CD8-positive, alpha-beta T cell (primary cell): ENCODE measurements at regions of chr14 and their contacts with region 1.

Region 1: DNA sequence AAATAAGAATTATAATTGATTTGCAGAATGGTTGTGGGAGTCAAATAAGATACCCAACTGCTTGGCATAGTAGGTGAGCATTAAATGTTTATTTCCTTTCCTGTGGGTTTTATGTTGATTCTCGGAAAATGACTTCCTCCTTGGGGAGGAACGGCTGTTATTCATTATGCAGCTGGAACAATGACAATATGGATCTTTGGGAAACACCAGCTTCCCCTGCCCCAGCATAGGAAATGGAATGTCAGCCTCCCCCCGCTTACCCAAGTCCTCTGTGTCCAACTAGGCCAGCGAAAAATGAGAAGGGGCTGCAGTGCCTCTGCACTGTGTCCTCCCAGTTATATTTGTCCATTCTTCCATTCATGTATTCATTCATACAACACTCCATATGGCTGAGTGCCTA is 11.7 kb upstream of the CCDC177 start:
- DNase-seq: no peak
- ATAC-seq: no peak
- H3K4me3 ChIP-seq: no peak overlapping the region
- H3K4me3 Mint-ChIP-seq: no peak overlapping the region
- H3K27ac ChIP-seq: no peak overlapping the region
- H3K27ac Mint-ChIP-seq: no peak overlapping the region
- H3K4me1 ChIP-seq: no peaks in the 10 kb centered on the region
- H3K4me1 Mint-ChIP-seq: no peaks in the 10 kb centered on the region
- H3K27me3 ChIP-seq: no peaks in the 10 kb centered on the region
- H3K27me3 Mint-ChIP-seq: peaks cover 5% of the 10 kb centered on the region
- CTCF ChIP-seq: no peak

Region 2: DNA sequence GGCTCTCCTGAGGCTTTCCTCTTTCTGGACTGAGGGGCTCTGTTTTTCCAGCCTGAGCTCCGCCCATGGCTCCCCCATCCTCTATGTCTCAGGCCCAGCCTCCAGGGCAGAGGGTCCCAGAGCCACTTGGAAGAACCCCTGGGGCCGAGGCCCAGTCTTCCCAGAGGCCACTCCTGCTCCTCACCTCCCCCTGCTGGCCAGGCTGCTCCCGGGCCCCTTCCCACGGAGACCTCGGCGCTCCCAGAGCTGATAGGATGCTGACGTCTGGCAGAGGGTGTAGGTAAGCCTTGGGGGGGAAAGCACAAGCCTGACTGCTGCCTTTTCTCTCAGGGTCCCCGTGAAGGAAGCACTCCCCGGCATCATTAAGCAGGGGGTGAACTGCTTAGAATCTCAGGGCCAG is 239.7 kb before region 1 on chr14:
- CTCF ChIA-PET with region 1: no interaction called
- POLR2A ChIA-PET with region 1: no interaction called
- intact Hi-C with region 1: no loop called
- DNase-seq: no peak
- ATAC-seq: no peak
- H3K4me3 ChIP-seq: no peak overlapping the region
- H3K4me3 Mint-ChIP-seq: no peak overlapping the region
- H3K27ac ChIP-seq: no peak overlapping the region
- H3K27ac Mint-ChIP-seq: no peak overlapping the region
- H3K4me1 ChIP-seq: no peaks in the 10 kb centered on the region
- H3K4me1 Mint-ChIP-seq: no peaks in the 10 kb centered on the region
- H3K27me3 ChIP-seq: no peaks in the 10 kb centered on the region
- H3K27me3 Mint-ChIP-seq: peaks cover under 1% of the 10 kb centered on the region
- CTCF ChIP-seq: no peak

Region 3: GRCh38 chr14:69715725-69716477 is 129.5 kb after region 1 on chr14:
- CTCF ChIA-PET with region 1: interaction called, 19 read pairs
- POLR2A ChIA-PET with region 1: no interaction called
- intact Hi-C with region 1: no loop called
- DNase-seq: peak in 3 of 9 experiments; percentile 19 to 63 (median 51)
- ATAC-seq: peak; percentile 29
- H3K4me3 ChIP-seq: no peak overlapping the region
- H3K4me3 Mint-ChIP-seq: no peak overlapping the region
- H3K27ac ChIP-seq: peak overlapping the region in 1 of 2 experiments; percentile 84
- H3K27ac Mint-ChIP-seq: peak overlapping the region; percentile 69
- H3K4me1 ChIP-seq: peaks cover 24% of the 10 kb centered on the region
- H3K4me1 Mint-ChIP-seq: peaks cover 33% of the 10 kb centered on the region
- H3K27me3 ChIP-seq: no peaks in the 10 kb centered on the region
- H3K27me3 Mint-ChIP-seq: no peaks in the 10 kb centered on the region
- CTCF ChIP-seq: no peak

Region 4: GRCh38 chr14:70027785-70028428 is 441.5 kb after region 1 on chr14:
- CTCF ChIA-PET with region 1: interaction called, 3 read pairs
- POLR2A ChIA-PET with region 1: no interaction called
- intact Hi-C with region 1: loop called in 1 of 2 experiments (anchors 2 kb)
- DNase-seq: peak; percentile 14 to 67 (median 55)
- ATAC-seq: peak; percentile 42
- H3K4me3 ChIP-seq: no peak overlapping the region
- H3K4me3 Mint-ChIP-seq: no peak overlapping the region
- H3K27ac ChIP-seq: no peak overlapping the region
- H3K27ac Mint-ChIP-seq: no peak overlapping the region
- H3K4me1 ChIP-seq: no peaks in the 10 kb centered on the region
- H3K4me1 Mint-ChIP-seq: peaks cover 2% of the 10 kb centered on the region
- H3K27me3 ChIP-seq: no peaks in the 10 kb centered on the region
- H3K27me3 Mint-ChIP-seq: peaks cover 6% of the 10 kb centered on the region
- CTCF ChIP-seq: peak; percentile 49